ENCODE measurements at regions of chr17 and their contacts with region 1.

Region 1: GRCh38 chr17:56592487-56593085 is 913 bp upstream of the NOG start:
- DNase-seq: peak; percentile 89
- H3K4me3 ChIP-seq: peak overlapping the region; percentile 21 to 75 (median 60)
- H3K27ac ChIP-seq: no peak overlapping the region
- H3K4me1 ChIP-seq: peaks cover 24 to 56% (median 54%) of the 10 kb centered on the region in 6 donors
- H3K27me3 ChIP-seq: peaks cover 0 to 93% (median 63%) of the 10 kb centered on the region in 7 donors
- CTCF ChIP-seq: peak; percentile 26 to 98 (median 94)
- POLR2A ChIP-seq: no peak

Region 2: DNA sequence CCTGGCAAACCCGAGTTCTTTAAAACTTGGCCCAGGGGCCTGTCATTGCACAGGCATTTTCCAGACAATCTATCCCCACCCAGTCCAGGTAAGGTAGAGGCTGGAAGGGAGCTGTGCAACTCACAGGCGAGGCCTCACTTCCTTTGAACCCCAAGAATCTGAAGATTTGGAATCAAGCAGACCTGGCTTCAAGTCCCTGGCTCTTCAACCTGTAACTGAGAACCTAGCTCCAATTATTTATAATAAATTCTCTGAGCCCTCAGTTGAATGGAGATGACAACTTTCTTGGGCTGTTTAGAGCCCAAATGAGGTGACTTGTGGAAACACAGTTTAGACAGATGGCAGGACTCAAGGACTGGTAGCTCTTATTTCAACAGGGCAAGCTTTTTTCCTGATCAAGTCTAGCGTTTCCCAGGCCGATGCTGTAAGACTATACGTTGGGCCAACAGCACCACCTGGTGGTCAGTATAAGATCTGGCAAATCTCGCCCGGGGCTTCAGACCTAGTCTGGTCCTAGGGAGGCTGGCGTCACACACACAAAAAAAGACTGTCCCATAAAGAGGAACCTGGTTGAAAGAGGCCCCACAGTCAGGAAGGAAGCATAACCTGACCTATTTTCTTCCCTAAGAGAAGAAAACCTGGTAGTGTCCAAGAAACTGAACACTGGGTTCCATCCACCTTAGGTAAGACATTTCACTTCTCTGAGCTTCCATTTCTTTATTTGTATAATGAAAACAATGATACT is 123.2 kb after region 1 on chr17:
- intact Hi-C with region 1: loop called (anchors 5 kb)
- DNase-seq: peak; percentile 88
- H3K4me3 ChIP-seq: no peak overlapping the region
- H3K27ac ChIP-seq: no peak overlapping the region
- H3K4me1 ChIP-seq: peaks cover 0 to 9% (median 6%) of the 10 kb centered on the region in 6 donors
- H3K27me3 ChIP-seq: peaks cover 0 to 8% (median 0%) of the 10 kb centered on the region in 7 donors
- CTCF ChIP-seq: peak; percentile 56 to 91 (median 79)
- POLR2A ChIP-seq: no peak

Region 3: DNA sequence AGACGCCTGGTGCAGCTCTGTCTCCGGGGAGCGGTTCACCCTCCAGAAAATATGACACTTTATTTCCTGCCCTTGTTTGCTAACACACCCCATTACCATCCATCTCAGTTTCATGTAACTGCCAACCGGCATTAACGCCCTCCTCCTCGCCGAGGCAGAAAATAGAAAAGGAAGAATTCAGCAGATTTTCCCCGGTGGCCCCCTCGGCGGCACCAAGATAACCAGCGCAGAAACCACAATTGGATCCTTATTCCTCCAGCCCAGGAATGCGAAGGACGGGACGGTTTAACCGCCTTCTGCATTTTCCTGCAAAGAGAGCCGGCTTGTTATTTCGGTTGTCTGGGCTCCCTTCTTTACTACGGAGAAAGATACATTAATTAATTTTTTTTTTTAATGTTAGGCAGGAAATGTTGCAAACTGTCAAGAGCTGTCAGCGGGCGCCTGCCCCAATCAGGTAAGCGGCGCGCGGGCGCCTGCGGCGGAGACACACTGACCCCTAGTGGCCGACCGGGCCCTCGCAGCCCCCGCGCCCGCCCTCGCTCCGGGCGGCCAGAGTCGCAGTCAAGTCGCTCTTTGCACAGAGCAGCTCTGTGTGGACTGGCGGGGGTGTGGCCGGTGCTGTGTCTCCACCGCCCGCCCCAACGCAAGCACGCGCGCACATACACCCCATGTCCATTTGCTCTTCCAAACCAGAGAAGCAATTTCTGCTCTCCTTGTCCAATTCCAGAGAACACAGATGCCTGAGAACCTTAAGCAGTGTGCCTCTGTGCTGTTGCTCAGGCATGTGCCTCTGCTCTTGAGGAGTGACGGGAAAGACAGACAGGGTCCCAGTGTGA is 187.5 kb after region 1 on chr17:
- intact Hi-C with region 1: loop called (anchors 5 kb)
- DNase-seq: peak; percentile 97
- H3K4me3 ChIP-seq: peak overlapping the region; percentile 18 to 66 (median 34)
- H3K27ac ChIP-seq: peak overlapping the region in 5 of 8 donors; percentile 9 to 44 (median 33)
- H3K4me1 ChIP-seq: peaks cover 4 to 19% (median 14%) of the 10 kb centered on the region in 6 donors
- H3K27me3 ChIP-seq: peaks cover 0 to 18% (median 4%) of the 10 kb centered on the region in 7 donors
- CTCF ChIP-seq: peak; percentile 87 to 100 (median 99)
- POLR2A ChIP-seq: no peak